Transverse colon (tissue), 4 donors: ENCODE measurements at regions of chr3 and their contacts with region 1.

Region 1: GRCh38 chr3:155217591-155217990 is 75.9 kb downstream of the STRIT1 start:
- DNase-seq: no peak
- H3K4me3 ChIP-seq: no peak overlapping the region
- H3K27ac ChIP-seq: no peak overlapping the region
- H3K4me1 ChIP-seq: no peaks in the 10 kb centered on the region
- H3K27me3 ChIP-seq: no peaks in the 10 kb centered on the region
- CTCF ChIP-seq: no peak
- EP300 ChIP-seq: no peak
- POLR2A ChIP-seq: no peak

Region 2: DNA sequence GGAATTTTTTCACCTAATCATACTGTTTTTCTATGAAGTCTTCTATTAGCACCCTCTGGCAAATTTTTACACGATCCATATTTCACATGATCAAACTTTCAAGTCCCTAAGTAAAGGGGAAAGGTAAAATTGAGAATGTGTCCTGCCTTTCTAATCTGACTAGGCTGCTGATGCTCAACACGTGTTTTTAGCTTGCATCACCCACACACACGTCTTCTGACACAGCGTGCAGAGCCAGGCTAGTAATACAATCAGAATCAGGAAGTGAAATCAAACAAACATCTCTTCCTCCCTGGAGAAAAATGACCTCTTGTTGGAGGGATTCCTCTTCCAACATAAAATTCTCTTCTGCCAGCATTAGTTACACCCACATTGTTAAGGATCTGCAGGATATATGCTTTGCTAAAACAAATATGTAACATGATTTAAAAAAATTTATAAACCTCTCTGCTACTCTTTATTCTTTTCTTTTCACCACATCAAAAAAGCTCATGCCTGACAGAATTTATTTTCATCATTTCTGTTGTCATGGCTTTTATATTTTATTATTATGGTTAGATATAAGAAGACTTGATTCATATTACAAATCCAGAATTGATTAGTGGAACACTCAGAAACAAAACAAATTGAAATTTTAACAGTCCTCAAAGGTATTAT is 1933.2 kb before region 1 on chr3:
- in situ Hi-C with region 1: no loop called
- intact Hi-C with region 1: loop called (anchors 5 kb)
- DNase-seq: peak; percentile 22
- H3K4me3 ChIP-seq: no peak overlapping the region
- H3K27ac ChIP-seq: peak overlapping the region in 2 of 4 donors; percentile 33 to 43
- H3K4me1 ChIP-seq: peaks cover 0 to 8% (median 0%) of the 10 kb centered on the region in 4 donors
- H3K27me3 ChIP-seq: no peaks in the 10 kb centered on the region
- CTCF ChIP-seq: no peak
- EP300 ChIP-seq: no peak
- POLR2A ChIP-seq: no peak

Region 3: DNA sequence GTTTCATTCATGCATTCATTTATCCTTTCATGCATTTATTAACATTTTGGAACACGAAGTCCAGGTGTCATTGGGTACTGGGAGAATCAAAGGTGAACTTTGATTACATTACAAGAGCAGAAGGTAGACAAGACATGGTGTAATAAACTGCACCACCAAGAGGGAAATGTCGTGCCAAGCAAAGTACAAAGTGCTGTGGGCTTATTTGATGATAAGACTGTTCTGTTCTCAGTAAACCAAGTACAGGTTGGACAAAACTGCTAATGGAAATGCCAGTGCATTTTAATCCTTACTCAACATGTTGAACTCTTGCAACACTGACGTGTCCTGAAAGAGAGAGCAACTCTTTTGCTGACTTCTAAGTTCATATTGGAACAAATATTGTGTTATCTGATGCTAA is 68.1 kb before region 1 on chr3:
- in situ Hi-C with region 1: no loop called
- intact Hi-C with region 1: no loop called
- DNase-seq: no peak
- H3K4me3 ChIP-seq: no peak overlapping the region
- H3K27ac ChIP-seq: no peak overlapping the region
- H3K4me1 ChIP-seq: no peaks in the 10 kb centered on the region
- H3K27me3 ChIP-seq: no peaks in the 10 kb centered on the region
- CTCF ChIP-seq: no peak
- EP300 ChIP-seq: no peak
- POLR2A ChIP-seq: no peak

Region 4: DNA sequence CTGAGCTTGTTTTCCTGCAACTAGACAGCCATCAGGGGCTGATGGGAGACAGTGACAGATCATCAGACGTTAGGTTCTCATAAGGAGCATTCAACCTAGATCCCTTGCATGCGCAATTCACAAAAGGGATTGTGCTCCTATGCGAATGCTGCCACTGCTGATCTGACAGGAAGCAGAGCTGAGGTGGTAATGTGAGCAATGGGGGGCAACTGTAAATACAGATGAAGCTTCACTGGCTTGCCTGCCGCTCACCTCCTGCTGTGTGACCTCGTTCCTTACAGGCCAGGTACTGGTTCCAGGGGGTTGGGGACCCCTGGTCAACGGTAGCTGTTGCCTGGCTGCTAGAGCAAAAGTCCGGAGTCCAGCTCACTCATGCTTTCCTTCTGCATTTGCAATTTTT is 876.4 kb after region 1 on chr3:
- in situ Hi-C with region 1: no loop called
- intact Hi-C with region 1: loop called (anchors 5 kb)
- DNase-seq: no peak
- H3K4me3 ChIP-seq: no peak overlapping the region
- H3K27ac ChIP-seq: no peak overlapping the region
- H3K4me1 ChIP-seq: no peaks in the 10 kb centered on the region
- H3K27me3 ChIP-seq: no peaks in the 10 kb centered on the region
- CTCF ChIP-seq: no peak
- EP300 ChIP-seq: no peak
- POLR2A ChIP-seq: no peak